OCI-LY7 (cell line): ENCODE measurements at regions of chr21 and their contacts with region 1.

Region 1: GRCh38 chr21:38733973-38734546 is 71.7 kb upstream of the ETS2 start:
- DNase-seq: peak; percentile 57
- H3K4me3 ChIP-seq: peak overlapping the region; percentile 61
- H3K27ac ChIP-seq: no peak overlapping the region
- H3K4me1 ChIP-seq: peaks cover 10% of the 10 kb centered on the region
- CTCF ChIP-seq: peak; percentile 99

Region 2: GRCh38 chr21:38756746-38757145 is 22.7 kb after region 1 on chr21:
- CTCF ChIA-PET with region 1: no interaction called
- POLR2A ChIA-PET with region 1: no interaction called
- intact Hi-C with region 1: no loop called
- DNase-seq: no peak
- H3K4me3 ChIP-seq: no peak overlapping the region
- H3K27ac ChIP-seq: no peak overlapping the region
- H3K4me1 ChIP-seq: no peaks in the 10 kb centered on the region
- CTCF ChIP-seq: no peak

Region 3: GRCh38 chr21:39016740-39017315 is 282.8 kb after region 1 on chr21:
- CTCF ChIA-PET with region 1: no interaction called
- POLR2A ChIA-PET with region 1: no interaction called
- intact Hi-C with region 1: loop called (anchors 5 kb)
- DNase-seq: peak; percentile 85
- H3K4me3 ChIP-seq: no peak overlapping the region
- H3K27ac ChIP-seq: no peak overlapping the region
- H3K4me1 ChIP-seq: peaks cover 18% of the 10 kb centered on the region
- CTCF ChIP-seq: no peak

Region 4: DNA sequence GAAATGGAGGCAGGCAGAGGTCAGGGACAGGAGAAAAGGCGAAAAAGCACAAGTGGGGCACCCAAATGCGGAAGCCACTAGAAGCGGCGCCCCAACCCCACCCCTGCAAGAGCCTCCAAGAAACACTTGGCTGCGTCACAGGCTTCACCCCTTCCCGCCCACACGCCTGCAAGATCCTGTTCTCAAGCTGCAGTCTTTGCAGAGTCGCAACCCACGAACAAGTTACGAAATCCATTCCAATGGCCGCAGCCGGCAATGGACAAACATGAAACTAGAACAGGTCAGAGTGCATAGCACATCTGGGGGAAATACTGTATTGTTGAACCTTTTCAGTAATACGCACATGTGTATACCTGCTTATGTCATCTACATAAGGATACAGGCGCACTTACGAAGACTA is 345.6 kb after region 1 on chr21:
- CTCF ChIA-PET with region 1: no interaction called
- POLR2A ChIA-PET with region 1: no interaction called
- intact Hi-C with region 1: loop called (anchors 2 kb)
- DNase-seq: no peak
- H3K4me3 ChIP-seq: no peak overlapping the region
- H3K27ac ChIP-seq: no peak overlapping the region
- H3K4me1 ChIP-seq: peaks cover 4% of the 10 kb centered on the region
- CTCF ChIP-seq: no peak

Region 5: DNA sequence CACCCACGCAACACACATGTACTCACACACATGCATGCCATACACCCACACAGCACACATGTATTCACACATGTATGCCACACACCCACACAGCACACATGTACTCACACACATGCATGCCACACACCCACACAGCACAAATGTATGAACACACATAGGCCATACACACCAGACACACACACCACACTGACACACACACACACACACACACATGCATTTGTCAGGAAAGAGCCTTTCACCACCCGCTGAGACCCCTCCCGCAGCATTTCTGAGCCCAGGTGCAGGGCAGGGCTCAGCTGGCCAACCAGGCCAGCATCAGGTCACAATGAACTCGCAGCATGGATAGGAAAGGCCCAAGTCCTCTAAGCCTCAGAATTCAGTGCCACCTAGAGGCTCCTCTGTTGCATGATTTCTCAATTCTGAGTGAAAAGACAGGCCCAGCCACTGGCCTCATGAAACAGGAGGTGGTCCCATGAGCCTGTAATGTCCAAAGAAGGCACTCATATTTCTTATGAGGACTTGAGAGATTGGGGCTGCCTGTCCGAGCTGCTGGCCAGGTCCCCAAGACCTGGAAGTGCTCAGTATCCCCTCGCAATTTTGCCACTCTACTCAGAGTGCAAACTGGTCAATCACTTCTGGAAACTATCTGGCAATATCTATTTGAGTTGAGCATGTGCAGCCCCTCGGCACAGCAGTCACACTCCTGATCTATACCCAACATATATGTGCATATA is 391.9 kb after region 1 on chr21:
- CTCF ChIA-PET with region 1: no interaction called
- POLR2A ChIA-PET with region 1: no interaction called
- intact Hi-C with region 1: loop called (anchors 2 kb)
- DNase-seq: peak; percentile 53
- H3K4me3 ChIP-seq: no peak overlapping the region
- H3K27ac ChIP-seq: no peak overlapping the region
- H3K4me1 ChIP-seq: no peaks in the 10 kb centered on the region
- CTCF ChIP-seq: peak; percentile 75